Left cardiac atrium (tissue), 4 donors: ENCODE measurements at regions of chr12 and their contacts with region 1.

Region 1: DNA sequence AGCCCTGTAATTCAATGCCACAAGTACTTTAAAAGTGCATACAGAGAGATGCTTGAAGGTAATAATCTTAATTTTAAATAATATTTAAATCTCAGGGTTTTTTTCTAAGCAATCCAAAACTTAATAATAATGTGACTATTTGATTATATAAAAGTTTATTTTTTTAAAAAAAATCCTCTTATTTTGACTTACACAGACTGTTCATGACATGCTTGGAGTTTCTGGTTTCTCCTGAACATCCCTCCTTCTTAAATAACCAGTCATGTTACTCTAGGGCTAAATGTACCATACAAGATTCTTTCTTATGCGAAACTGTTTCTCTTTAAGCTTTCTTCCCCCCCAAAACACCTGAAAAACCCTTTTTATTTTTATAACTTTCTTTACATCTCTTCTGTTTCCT is 58.2 kb upstream of the SLC2A13 start:
- DNase-seq: no peak
- ATAC-seq: no peak

Region 2: GRCh38 chr12:40208707-40209446 is 44.8 kb after region 1 on chr12:
- intact Hi-C with region 1: loop called in 1 of 2 experiments (anchors 5 kb)
- DNase-seq: no peak
- ATAC-seq: peak in 1 of 2 donors; percentile 47